GM12878 (cell line): ENCODE measurements at regions of chr19 and their contacts with region 1.

Region 1: DNA sequence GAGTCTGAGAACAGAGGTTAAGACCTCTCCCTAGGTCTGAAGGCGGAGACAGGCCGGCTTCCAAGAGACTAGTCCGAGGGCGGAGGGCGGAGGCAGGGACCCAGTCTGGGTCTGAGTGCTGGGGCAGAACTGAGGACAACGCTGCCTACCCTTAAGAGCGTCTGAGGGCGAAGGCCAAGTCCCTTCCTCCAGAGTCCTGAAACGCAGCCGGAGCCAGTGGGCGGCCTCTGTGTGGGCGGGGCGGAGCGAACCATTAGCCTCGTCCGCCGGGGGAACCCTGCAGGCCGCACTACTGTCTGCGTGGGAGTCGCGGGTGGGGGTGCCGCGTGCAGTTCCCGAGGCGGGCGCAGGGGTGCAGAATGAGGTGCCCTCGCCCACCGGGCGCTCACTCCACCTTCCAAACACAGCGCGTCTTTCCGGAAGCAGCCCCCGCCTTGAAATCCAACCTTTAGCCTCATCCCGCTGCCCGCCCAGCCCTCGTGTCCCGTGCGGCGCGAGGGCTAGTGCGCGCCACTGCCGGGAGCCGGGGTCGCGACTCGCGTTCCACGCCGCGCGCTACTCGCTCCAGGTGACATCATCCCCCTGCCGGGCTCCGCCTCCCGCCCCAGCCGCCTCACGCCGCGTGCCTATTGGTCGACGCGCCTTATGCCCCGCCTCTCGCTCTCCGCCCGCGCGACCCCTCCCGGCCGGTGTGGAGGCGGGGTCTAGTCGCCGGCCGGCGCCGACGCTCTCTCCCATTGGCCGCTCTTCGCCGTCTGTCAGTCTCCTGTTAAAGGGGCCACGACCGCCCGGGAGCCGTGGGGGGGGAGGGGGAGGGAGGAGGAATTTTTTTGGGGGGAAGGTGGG is at the start of gene C19orf73:
- DNase-seq: peak; percentile 69
- ATAC-seq: peak; percentile 91
- H3K4me3 ChIP-seq: peak within 1 kb of the TSS; percentile 60; the same call in 1 of the 2 replicates
- H3K27ac ChIP-seq: peak within 1 kb of the TSS; percentile 73
- H3K4me1 ChIP-seq: peaks cover 9% of the 10 kb centered on the region
- H3K27me3 ChIP-seq: peaks cover 7 to 8% of the 10 kb centered on the region in 2 experiments
- CTCF ChIP-seq: peak in 1 of 3 experiments; percentile 35; a peak in 1 of 6 replicates
- EP300 ChIP-seq: no peak
- POLR2A ChIP-seq: peak; percentile 78
- RAD21 ChIP-seq: no peak
- polyA plus RNA-seq, gene C19orf73: 0.20 to 0.69 TPM

Region 2: GRCh38 chr19:48943081-48943480 is 175.7 kb before region 1 on chr19:
- CTCF ChIA-PET with region 1: no interaction called
- POLR2A ChIA-PET with region 1: no interaction called
- RAD21 ChIA-PET with region 1: no interaction called
- SMC1A ChIA-PET with region 1: no interaction called
- in situ Hi-C with region 1: no loop called
- intact Hi-C with region 1: no loop called
- DNase-seq: no peak
- ATAC-seq: no peak
- H3K4me3 ChIP-seq: no peak overlapping the region
- H3K27ac ChIP-seq: no peak overlapping the region
- H3K4me1 ChIP-seq: no peaks in the 10 kb centered on the region
- H3K27me3 ChIP-seq: no peaks in the 10 kb centered on the region
- CTCF ChIP-seq: no peak
- EP300 ChIP-seq: no peak
- POLR2A ChIP-seq: no peak
- RAD21 ChIP-seq: no peak

Region 3: DNA sequence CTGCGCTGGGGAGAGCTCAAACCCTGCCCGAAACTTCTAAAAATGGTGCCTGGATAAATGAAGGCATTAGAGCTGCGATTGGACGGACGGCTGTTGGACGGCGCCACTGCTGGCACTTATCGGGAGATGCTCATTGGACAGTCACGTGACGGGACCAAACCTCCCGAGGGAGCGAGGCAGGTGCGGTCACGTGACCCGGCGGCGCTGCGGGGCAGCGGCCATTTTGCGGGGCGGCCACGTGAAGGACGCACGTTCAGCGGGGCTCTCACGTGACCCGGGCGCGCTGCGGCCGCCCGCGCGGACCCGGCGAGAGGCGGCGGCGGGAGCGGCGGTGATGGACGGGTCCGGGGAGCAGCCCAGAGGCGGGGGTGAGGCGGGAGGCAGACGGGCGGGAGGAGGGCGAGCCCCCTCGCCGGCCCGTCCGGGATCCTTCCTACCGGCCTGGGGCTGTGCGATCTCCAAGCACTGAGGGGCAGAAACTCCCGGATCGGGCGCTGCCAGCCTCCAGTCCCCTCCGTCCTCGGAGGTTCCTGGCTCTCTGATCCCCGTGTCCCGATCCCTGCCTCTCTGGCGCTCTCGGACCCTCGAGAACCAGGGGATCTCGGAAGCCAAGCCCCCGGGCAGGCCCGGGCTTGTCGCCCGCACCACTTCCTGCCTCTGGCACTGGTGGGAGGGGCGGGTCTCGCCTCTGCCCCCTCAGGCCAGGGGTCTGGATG is 164.0 kb before region 1 on chr19 and contains the start of gene BAX:
- CTCF ChIA-PET with region 1: no interaction called
- POLR2A ChIA-PET with region 1: no interaction called
- RAD21 ChIA-PET with region 1: no interaction called
- SMC1A ChIA-PET with region 1: no interaction called
- in situ Hi-C with region 1: no loop called
- intact Hi-C with region 1: no loop called
- DNase-seq: peak; percentile 92
- ATAC-seq: peak; percentile 98
- H3K4me3 ChIP-seq: peak within 1 kb of the TSS; percentile 98
- H3K27ac ChIP-seq: peak within 1 kb of the TSS; percentile 99
- H3K4me1 ChIP-seq: peaks cover 5% of the 10 kb centered on the region; the same call in 1 of the 2 replicates
- H3K27me3 ChIP-seq: no peaks in the 10 kb centered on the region
- CTCF ChIP-seq: peak in 1 of 3 experiments; percentile 18; a peak in 1 of 6 replicates
- EP300 ChIP-seq: no peak
- POLR2A ChIP-seq: peak; percentile 86
- RAD21 ChIP-seq: 0 out of 2 replicates have a peak, but pooled peaks have one; percentile 20
- polyA plus RNA-seq, gene BAX: 7.2 to 15.3 TPM

Region 4: DNA sequence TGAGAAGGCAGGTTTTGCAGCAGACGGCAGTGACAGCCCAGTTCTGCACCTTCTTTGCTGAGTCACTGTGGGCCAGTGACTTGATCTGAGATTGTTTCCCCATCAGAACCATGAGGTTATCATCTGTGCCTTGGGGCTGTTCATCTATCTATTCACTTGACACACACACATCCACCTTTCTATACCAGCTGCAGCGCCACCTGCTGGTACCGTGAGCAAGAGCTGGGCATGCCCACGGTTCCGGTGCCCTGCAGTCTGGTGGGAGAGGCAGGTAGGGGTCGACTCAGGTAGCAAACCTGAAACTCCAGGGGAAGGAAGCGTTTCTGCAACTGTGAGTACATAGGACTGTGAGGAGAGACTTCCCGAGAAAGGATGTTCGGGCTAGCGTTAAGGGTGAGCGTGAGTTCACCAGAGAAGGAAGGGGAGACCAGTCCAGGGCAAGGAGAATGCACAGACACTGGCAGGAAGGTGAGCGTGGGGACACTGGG is 12.1 kb before region 1 on chr19:
- CTCF ChIA-PET with region 1: interaction called, 11 read pairs
- POLR2A ChIA-PET with region 1: no interaction called
- RAD21 ChIA-PET with region 1: no interaction called
- SMC1A ChIA-PET with region 1: no interaction called
- in situ Hi-C with region 1: no loop called
- intact Hi-C with region 1: no loop called
- DNase-seq: no peak
- ATAC-seq: peak; percentile 83
- H3K4me3 ChIP-seq: no peak overlapping the region
- H3K27ac ChIP-seq: no peak overlapping the region
- H3K4me1 ChIP-seq: no peaks in the 10 kb centered on the region
- H3K27me3 ChIP-seq: no peaks in the 10 kb centered on the region
- CTCF ChIP-seq: peak; percentile 67 to 88 (median 83)
- EP300 ChIP-seq: no peak
- POLR2A ChIP-seq: peak; percentile 58
- RAD21 ChIP-seq: 0 out of 2 replicates have a peak, but pooled peaks have one; percentile 19

Region 5: GRCh38 chr19:49148784-49149651 is 30.2 kb after region 1 on chr19:
- CTCF ChIA-PET with region 1: interaction called, 14 read pairs
- POLR2A ChIA-PET with region 1: interaction called, 3 read pairs
- RAD21 ChIA-PET with region 1: no interaction called
- SMC1A ChIA-PET with region 1: no interaction called
- in situ Hi-C with region 1: no loop called
- intact Hi-C with region 1: no loop called
- DNase-seq: no peak
- ATAC-seq: peak; percentile 71
- H3K4me3 ChIP-seq: no peak overlapping the region
- H3K27ac ChIP-seq: no peak overlapping the region
- H3K4me1 ChIP-seq: peaks cover 10% of the 10 kb centered on the region
- H3K27me3 ChIP-seq: peaks cover 6 to 22% of the 10 kb centered on the region in 2 experiments
- CTCF ChIP-seq: no peak
- EP300 ChIP-seq: no peak
- POLR2A ChIP-seq: no peak
- RAD21 ChIP-seq: no peak

Region 6: GRCh38 chr19:49165111-49165750 is 46.4 kb after region 1 on chr19:
- CTCF ChIA-PET with region 1: no interaction called
- POLR2A ChIA-PET with region 1: no interaction called
- RAD21 ChIA-PET with region 1: no interaction called
- SMC1A ChIA-PET with region 1: no interaction called
- in situ Hi-C with region 1: no loop called
- intact Hi-C with region 1: no loop called
- DNase-seq: no peak
- ATAC-seq: no peak
- H3K4me3 ChIP-seq: no peak overlapping the region
- H3K27ac ChIP-seq: no peak overlapping the region
- H3K4me1 ChIP-seq: no peaks in the 10 kb centered on the region
- H3K27me3 ChIP-seq: no peaks in the 10 kb centered on the region; a peak in 1 of 4 replicates
- CTCF ChIP-seq: no peak
- EP300 ChIP-seq: no peak
- POLR2A ChIP-seq: no peak
- RAD21 ChIP-seq: no peak